ENCODE measurements at regions of chr12 and their contacts with region 1.

Region 1: DNA sequence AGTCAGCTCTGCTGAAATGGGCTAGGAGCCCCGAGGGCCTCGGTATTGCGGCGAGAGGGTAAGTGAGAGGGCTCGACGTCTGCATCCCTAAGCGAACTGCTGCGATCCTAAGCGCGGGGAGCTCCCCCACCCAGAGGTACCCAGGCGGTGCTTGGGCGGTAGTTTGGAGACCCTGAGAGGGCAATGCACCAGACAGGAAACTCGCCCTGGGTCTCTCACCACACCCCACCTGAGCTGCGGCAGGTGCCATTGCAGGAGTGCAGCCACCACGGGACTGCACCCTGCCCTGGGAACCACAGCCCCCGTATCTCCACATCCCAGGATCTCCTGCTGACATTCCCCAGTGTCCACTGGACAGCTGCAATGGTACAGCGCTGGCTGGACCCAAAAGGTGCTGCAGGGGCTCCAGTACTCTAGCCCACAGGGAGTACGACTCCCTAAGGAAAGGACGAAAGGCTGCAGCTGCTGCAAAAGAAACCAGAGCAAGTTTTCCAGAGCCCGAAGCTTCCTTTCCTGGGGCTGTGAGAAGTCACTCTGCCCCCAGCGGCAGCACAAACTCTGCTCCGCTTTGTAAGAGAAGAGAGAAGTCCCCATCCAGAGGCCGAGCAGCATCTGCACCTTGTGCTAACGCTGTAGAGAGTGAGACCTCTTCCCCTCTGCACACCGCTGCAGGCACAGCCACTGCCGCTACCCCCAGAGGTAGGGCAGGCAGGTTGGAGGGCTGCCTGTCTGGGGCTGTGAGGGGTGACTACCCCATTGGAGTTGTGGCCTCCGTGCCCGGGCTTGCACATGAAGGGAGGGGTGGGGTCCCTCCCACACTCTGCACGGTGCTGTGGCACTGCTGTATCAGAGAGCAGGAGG is 31.1 kb upstream of the MON2 start:
- DNase-seq: peak; percentile 41 to 80 (median 69)
- H3K4me3 ChIP-seq: peak overlapping the region in 2 of 4 donors; percentile 36 to 52
- H3K27ac ChIP-seq: no peak overlapping the region
- H3K4me1 ChIP-seq: peaks cover 5 to 14% of the 10 kb centered on the region in 2 donors
- H3K27me3 ChIP-seq: peaks cover 9% of the 10 kb centered on the region
- CTCF ChIP-seq: peak; percentile 16 to 57 (median 46)
- POLR2A ChIP-seq: no peak

Region 2: DNA sequence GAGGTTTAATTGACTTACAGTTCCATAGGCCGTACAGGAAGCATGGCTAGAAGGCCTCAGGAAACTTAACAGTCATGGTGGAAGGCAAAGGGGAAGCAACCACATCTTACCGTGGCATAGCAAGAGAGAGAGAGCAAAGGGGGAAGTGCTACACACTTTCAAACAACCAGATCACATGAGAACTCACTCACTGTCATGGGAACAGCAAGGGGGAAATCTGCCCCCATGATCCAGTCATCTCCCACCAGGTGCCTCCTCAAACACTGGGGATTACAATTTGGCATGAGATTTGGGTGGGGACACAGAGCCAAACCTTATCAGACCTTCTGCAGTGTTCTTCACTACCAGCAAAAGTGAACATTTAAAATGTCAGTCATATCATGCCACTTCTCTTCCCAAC is 116.5 kb before region 1 on chr12:
- intact Hi-C with region 1: no loop called
- DNase-seq: no peak
- H3K4me3 ChIP-seq: no peak overlapping the region
- H3K27ac ChIP-seq: no peak overlapping the region
- H3K4me1 ChIP-seq: peaks cover 0 to 4% of the 10 kb centered on the region in 2 donors
- H3K27me3 ChIP-seq: no peaks in the 10 kb centered on the region
- CTCF ChIP-seq: no peak
- POLR2A ChIP-seq: no peak

Region 3: DNA sequence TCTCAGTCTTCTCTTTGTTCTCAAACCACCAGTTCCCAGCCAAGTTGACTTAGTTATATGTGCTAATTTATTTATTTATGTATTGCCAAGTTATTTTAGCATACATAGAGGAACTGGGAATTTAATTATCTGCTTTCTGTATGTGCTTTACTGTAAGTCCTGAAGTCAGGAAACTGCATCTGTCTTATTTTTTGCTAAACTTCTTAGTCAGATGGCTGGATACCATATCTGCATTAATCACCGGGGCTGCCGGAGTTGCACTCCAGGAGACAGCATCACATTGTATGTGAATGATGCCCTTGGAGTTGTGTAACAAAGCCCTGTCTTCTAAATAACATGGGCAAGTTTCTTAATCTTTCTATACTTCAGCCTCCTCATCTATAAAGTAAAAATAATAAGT is 127.3 kb after region 1 on chr12:
- intact Hi-C with region 1: loop called in 1 of 2 experiments (anchors 10 kb)
- DNase-seq: peak in 3 of 7 donors; percentile 19 to 28 (median 27)
- H3K4me3 ChIP-seq: no peak overlapping the region
- H3K27ac ChIP-seq: no peak overlapping the region
- H3K4me1 ChIP-seq: peaks cover 0 to 3% of the 10 kb centered on the region in 2 donors
- H3K27me3 ChIP-seq: no peaks in the 10 kb centered on the region
- CTCF ChIP-seq: no peak
- POLR2A ChIP-seq: no peak

Region 4: DNA sequence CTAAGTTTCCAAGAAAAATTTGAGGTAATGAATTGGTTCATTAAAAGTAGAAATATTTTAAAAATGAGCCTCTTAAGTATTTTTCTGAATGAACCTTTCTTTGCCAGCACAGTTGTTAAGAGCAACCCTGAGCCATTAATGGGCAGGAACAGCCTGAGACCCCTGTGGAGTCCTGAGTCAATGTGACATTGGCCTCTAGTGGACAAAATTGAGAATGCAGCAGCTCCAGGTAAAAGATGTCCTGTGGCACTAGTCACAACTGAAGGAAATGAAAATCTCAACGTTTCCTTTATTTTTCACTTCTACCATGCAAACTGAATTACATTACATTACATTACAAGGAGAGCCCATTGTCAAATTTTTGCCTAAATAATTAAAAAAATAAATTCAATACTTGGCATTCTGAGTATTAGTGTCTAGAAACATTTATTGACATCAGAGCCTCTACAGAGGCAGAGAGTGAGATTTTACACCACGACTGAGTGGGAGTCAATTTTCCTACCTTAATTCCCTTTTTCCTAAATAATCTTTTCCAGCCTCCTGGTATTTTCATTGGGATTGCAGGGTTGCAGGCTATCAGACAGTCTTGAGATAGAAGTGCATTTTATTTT is 363.7 kb after region 1 on chr12:
- intact Hi-C with region 1: loop called in 1 of 2 experiments (anchors 5 kb)
- DNase-seq: peak; percentile 31 to 79 (median 58)
- H3K4me3 ChIP-seq: no peak overlapping the region
- H3K27ac ChIP-seq: no peak overlapping the region
- H3K4me1 ChIP-seq: no peaks in the 10 kb centered on the region
- H3K27me3 ChIP-seq: no peaks in the 10 kb centered on the region
- CTCF ChIP-seq: peak; percentile 85 to 96 (median 88)
- POLR2A ChIP-seq: no peak

Measured in adrenal gland (tissue), 19 donors.